ENCODE measurements at regions of chr15 and their contacts with region 1.

Region 1: DNA sequence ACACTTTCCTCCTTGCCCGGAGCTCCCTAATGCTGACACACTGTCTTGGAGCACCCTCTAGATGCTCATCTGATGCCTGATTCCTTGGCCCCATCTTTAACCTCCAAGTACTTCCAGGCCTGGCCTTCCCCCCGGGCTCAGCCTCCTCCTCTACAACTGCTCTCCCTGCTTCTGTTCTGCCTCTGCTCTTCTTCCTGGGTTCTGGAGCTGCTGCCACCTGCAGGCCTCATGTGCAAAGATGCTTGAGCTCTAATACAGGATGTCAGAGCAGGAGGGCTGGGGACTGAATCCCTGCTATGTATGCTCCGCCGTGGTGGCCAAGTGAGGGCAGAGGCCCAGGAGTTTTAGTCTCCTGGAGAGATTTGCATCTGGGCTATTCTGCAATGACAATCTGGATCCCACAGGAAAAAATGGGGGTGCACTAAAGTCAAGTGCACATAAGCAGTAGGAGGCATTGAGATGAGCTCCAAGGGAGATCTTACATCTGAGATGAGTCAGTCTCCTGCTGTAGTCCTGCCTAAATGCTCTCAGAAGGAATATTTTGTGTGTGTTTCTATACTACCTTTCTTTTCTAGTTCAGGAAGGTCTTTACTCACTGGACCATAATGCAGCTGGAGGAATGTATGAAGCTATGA is 296.3 kb downstream of the UACA start:
- H3K4me3 Mint-ChIP-seq: no peak overlapping the region
- H3K27ac Mint-ChIP-seq: peak overlapping the region; percentile 7
- H3K4me1 Mint-ChIP-seq: peaks cover 43% of the 10 kb centered on the region
- H3K27me3 Mint-ChIP-seq: peaks cover 53% of the 10 kb centered on the region

Region 2: DNA sequence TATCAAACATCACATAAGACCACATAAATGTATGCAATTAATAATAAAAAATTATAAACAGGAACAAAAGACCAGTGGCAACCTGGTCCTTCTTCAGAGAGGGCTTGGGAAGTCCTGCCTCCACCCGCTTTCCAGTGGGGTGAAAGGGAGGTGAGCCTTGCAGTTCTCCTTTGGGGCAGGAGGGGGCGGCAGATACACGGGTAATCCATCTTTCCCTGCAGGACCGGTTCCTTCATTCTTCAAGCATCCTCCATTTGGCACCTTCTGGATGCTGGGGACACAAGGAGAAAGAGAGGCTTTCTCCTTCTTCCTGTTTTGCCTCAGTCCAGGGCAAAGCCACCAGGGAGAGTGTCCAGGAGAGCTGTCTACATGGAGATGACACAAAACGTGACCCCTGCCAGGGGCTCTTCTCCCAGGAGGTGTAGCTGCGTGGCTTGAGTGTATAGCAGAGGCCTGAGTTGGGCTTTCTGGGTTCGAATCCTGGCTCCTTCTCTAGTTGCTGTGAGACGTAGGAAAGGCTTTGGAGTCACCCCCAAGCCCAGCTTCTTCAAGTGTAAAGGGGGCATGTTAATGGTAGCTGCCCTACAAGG is 991.1 kb before region 1 on chr15:
- intact Hi-C with region 1: loop called (anchors 5 kb)
- H3K4me3 Mint-ChIP-seq: no peak overlapping the region
- H3K27ac Mint-ChIP-seq: no peak overlapping the region
- H3K4me1 Mint-ChIP-seq: peaks cover 2% of the 10 kb centered on the region
- H3K27me3 Mint-ChIP-seq: peaks cover 21% of the 10 kb centered on the region

Region 3: DNA sequence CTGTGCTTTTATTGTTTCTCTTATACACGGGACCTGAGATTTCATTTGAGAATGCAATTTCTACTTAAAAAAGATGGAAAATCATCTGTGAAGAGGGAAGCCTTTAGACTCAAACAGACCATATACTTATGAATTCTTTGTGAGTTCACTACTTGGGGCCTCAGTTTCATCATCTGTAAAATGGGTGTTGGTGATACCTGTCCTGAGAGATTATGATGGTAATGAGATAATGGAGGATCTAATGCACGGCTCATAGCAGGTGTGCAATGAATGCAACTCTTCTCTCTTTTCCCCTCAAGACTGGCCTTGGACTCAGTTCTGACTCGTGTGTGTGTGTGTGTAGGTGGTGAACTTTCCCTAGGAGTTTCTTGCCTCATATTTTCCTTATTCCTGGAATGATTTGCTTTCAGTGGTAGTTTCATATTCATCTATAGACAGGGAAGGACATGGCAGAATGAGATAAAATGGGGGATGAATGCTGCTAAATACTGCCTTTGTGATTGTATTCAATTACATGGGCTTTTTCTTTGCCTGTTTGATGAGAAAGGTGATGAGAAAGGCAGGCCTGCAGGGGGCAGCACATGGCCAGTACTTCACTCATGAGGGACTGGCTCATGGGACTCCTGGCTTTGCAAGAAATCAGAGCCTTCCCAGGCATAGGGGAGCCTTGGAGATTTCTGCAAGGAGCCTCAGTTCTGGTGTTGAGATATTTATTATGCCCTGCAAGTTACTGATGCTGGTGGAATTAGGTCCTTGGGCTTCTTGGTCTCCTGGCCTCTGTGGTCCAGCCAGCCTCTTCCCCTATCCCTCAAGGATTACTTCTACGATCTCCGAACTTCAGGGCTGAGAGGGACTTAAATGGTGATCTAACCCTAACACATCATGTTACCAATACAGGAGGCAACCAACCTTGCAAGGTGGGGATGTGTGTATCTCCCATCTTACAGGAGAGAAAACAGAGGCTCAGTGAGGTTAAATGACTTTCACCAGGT is 943.7 kb before region 1 on chr15:
- intact Hi-C with region 1: loop called (anchors 5 kb)
- H3K4me3 Mint-ChIP-seq: no peak overlapping the region
- H3K27ac Mint-ChIP-seq: no peak overlapping the region
- H3K4me1 Mint-ChIP-seq: no peaks in the 10 kb centered on the region
- H3K27me3 Mint-ChIP-seq: peaks cover 8% of the 10 kb centered on the region

Region 4: GRCh38 chr15:69729161-69729748 is 737.8 kb before region 1 on chr15:
- intact Hi-C with region 1: loop called (anchors 10 kb)
- H3K4me3 Mint-ChIP-seq: no peak overlapping the region
- H3K27ac Mint-ChIP-seq: no peak overlapping the region
- H3K4me1 Mint-ChIP-seq: peaks cover 49% of the 10 kb centered on the region
- H3K27me3 Mint-ChIP-seq: peaks cover 3% of the 10 kb centered on the region

Region 5: GRCh38 chr15:70512772-70513362 is 45.9 kb after region 1 on chr15:
- intact Hi-C with region 1: loop called (anchors 2 kb)
- H3K4me3 Mint-ChIP-seq: no peak overlapping the region
- H3K27ac Mint-ChIP-seq: no peak overlapping the region
- H3K4me1 Mint-ChIP-seq: peaks cover 50% of the 10 kb centered on the region
- H3K27me3 Mint-ChIP-seq: peaks cover 28% of the 10 kb centered on the region